ENCODE measurements at regions of chr10 and their contacts with region 1.

Region 1: GRCh38 chr10:113126229-113127201 is 176.5 kb downstream of the TCF7L2 start:
- DNase-seq: peak; percentile 55 to 75
- ATAC-seq: peak; percentile 87 to 99 (median 94)
- H3K4me3 ChIP-seq: peak overlapping the region in 8 of 10 donors; percentile 19 to 47 (median 39)
- H3K27ac ChIP-seq: peak overlapping the region in 7 of 10 donors; percentile 5 to 69 (median 28)
- H3K4me1 ChIP-seq: peaks cover 0 to 27% (median 4%) of the 10 kb centered on the region in 9 donors
- H3K27me3 ChIP-seq: peaks cover 0 to 18% (median 0%) of the 10 kb centered on the region in 7 donors
- CTCF ChIP-seq: peak; percentile 54 to 87 (median 75)

Region 2: GRCh38 chr10:112565434-112566053 is 561.0 kb before region 1 on chr10:
- intact Hi-C with region 1: loop called in 6 of 10 experiments (anchors 5 to 10 kb)
- DNase-seq: peak in 1 of 2 donors; percentile 29
- ATAC-seq: peak in 3 of 8 donors; percentile 55 to 64 (median 63)
- H3K4me3 ChIP-seq: no peak overlapping the region
- H3K27ac ChIP-seq: no peak overlapping the region
- H3K4me1 ChIP-seq: no peaks in the 10 kb centered on the region
- H3K27me3 ChIP-seq: no peaks in the 10 kb centered on the region
- CTCF ChIP-seq: peak; percentile 34 to 72 (median 66)

Region 3: DNA sequence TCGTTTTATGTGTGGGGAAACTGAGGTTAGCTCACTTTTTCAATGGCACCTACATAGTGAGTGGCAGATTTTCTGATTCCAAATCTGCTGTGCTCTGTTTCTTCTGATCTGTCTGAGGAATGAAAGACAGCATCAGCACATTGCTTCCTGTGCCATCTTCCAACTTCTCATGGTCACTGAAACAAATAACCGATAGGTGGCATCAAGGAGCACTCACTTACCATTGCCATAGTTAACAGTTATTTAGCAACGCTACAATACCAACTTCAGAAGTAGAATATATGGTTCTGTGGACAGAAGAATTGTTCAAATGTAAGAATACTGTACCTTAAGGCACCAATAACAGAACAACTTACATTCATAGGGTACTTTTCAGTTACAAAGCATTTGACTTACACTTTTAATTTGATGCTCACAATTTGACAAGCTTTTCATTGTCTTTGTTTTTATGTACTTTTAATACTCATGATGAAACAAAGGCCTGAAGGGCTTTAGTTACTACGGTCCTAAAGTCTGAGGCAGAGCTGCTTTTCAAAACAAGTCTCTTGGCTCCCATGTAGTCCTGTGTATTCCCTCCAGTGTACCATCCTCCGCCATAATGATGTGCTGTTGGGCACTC is 405.3 kb before region 1 on chr10:
- intact Hi-C with region 1: loop called in 9 of 10 experiments (anchors 5 to 10 kb)
- DNase-seq: peak in 1 of 2 donors; percentile 34
- ATAC-seq: peak in 6 of 8 donors; percentile 29 to 59 (median 54)
- H3K4me3 ChIP-seq: no peak overlapping the region
- H3K27ac ChIP-seq: no peak overlapping the region
- H3K4me1 ChIP-seq: peaks cover 0 to 5% (median 0%) of the 10 kb centered on the region in 9 donors
- H3K27me3 ChIP-seq: no peaks in the 10 kb centered on the region
- CTCF ChIP-seq: peak; percentile 39 to 83 (median 71)

Region 4: GRCh38 chr10:113385021-113385999 is 258.8 kb after region 1 on chr10:
- intact Hi-C with region 1: loop called in 9 of 10 experiments (anchors 2 to 10 kb)
- DNase-seq: peak; percentile 78 to 87
- ATAC-seq: peak; percentile 95 to 98 (median 97)
- H3K4me3 ChIP-seq: peak overlapping the region in 1 of 10 donors; percentile 29
- H3K27ac ChIP-seq: peak overlapping the region in 6 of 10 donors; percentile 5 to 61 (median 26)
- H3K4me1 ChIP-seq: peaks cover 0 to 38% (median 24%) of the 10 kb centered on the region in 9 donors
- H3K27me3 ChIP-seq: peaks cover 0 to 6% (median 0%) of the 10 kb centered on the region in 7 donors
- CTCF ChIP-seq: peak; percentile 61 to 94 (median 86)

Region 5: GRCh38 chr10:113563306-113564088 is 437.0 kb after region 1 on chr10:
- intact Hi-C with region 1: loop called in 1 of 10 experiments (anchors 5 kb)
- DNase-seq: peak; percentile 55 to 79
- ATAC-seq: peak; percentile 76 to 92 (median 86)
- H3K4me3 ChIP-seq: peak overlapping the region in 8 of 10 donors; percentile 21 to 55 (median 46)
- H3K27ac ChIP-seq: no peak overlapping the region
- H3K4me1 ChIP-seq: peaks cover 0 to 5% (median 0%) of the 10 kb centered on the region in 9 donors
- H3K27me3 ChIP-seq: peaks cover 0 to 15% (median 5%) of the 10 kb centered on the region in 7 donors
- CTCF ChIP-seq: peak; percentile 92 to 99 (median 98)

Measured in heart right ventricle (tissue), 16 donors.